Heart left ventricle (tissue), 16 donors: ENCODE measurements at regions of chr3 and their contacts with region 1.

Region 1: DNA sequence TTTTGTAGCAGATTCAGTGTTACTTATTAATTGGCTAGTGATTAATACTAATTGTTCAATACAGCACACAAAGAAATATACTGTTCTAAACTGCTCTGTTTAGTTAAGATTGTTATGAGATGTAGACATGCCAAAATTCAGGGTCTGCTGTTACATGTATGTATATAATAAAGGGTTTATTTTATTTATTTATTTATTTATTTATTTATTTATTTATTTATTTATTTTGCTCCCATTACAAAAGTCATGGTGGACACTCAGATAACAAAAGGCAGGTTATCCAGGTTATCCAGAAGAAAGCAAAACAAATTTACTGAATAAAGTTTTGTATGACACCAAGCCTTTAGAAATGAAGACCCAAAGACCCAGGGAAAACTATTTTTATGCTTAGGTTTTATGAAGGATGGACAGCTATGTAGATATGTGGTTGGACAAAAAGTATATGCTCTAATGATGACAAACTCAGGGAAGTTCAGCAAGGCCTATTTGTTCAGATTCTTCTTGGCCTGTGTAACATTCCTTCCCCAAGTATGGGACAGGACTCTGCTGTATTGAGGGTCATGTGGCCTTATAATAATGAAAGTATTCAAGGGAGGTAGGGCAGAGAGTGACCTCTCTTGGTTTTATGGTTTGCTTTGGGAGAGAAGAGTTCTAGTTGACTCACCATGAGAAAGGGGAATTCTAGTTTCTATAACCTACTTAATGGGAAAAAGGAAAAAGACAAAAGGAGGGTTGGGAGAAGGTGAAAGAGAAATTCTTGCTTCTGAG is 1056.8 kb downstream of the ROBO2 start:
- DNase-seq: no peak
- ATAC-seq: no peak
- H3K4me3 ChIP-seq: no peak overlapping the region
- H3K27ac ChIP-seq: no peak overlapping the region
- H3K4me1 ChIP-seq: peaks cover 0 to 38% (median 10%) of the 10 kb centered on the region in 12 donors
- H3K27me3 ChIP-seq: no peaks in the 10 kb centered on the region
- CTCF ChIP-seq: no peak
- POLR2A ChIP-seq: no peak

Region 2: GRCh38 chr3:78183906-78184599 is 87.4 kb after region 1 on chr3:
- intact Hi-C with region 1: loop called in 1 of 10 experiments (anchors 10 kb)
- DNase-seq: no peak
- ATAC-seq: no peak
- H3K4me3 ChIP-seq: no peak overlapping the region
- H3K27ac ChIP-seq: no peak overlapping the region
- H3K4me1 ChIP-seq: no peaks in the 10 kb centered on the region
- H3K27me3 ChIP-seq: no peaks in the 10 kb centered on the region
- CTCF ChIP-seq: no peak
- POLR2A ChIP-seq: no peak

Region 3: GRCh38 chr3:78304115-78304514 is 207.4 kb after region 1 on chr3:
- intact Hi-C with region 1: no loop called
- DNase-seq: no peak
- ATAC-seq: no peak
- H3K4me3 ChIP-seq: no peak overlapping the region
- H3K27ac ChIP-seq: no peak overlapping the region
- H3K4me1 ChIP-seq: no peaks in the 10 kb centered on the region
- H3K27me3 ChIP-seq: no peaks in the 10 kb centered on the region
- CTCF ChIP-seq: no peak
- POLR2A ChIP-seq: no peak